ENCODE measurements at regions of chr11 and their contacts with region 1.

Region 1: GRCh38 chr11:116357784-116358544 is 414.8 kb downstream of the BUD13 start:
- DNase-seq: peak; percentile 35
- H3K4me3 ChIP-seq: no peak overlapping the region
- H3K27ac ChIP-seq: no peak overlapping the region
- H3K4me1 ChIP-seq: no peaks in the 10 kb centered on the region
- H3K27me3 ChIP-seq: peaks cover 7% of the 10 kb centered on the region
- CTCF ChIP-seq: peak; percentile 61

Region 2: GRCh38 chr11:116499396-116500003 is 141.5 kb after region 1 on chr11:
- intact Hi-C with region 1: loop called (anchors 2 kb)
- DNase-seq: peak; percentile 88
- H3K4me3 ChIP-seq: no peak overlapping the region
- H3K27ac ChIP-seq: no peak overlapping the region
- H3K4me1 ChIP-seq: no peaks in the 10 kb centered on the region
- H3K27me3 ChIP-seq: no peaks in the 10 kb centered on the region
- CTCF ChIP-seq: peak; percentile 60

Region 3: DNA sequence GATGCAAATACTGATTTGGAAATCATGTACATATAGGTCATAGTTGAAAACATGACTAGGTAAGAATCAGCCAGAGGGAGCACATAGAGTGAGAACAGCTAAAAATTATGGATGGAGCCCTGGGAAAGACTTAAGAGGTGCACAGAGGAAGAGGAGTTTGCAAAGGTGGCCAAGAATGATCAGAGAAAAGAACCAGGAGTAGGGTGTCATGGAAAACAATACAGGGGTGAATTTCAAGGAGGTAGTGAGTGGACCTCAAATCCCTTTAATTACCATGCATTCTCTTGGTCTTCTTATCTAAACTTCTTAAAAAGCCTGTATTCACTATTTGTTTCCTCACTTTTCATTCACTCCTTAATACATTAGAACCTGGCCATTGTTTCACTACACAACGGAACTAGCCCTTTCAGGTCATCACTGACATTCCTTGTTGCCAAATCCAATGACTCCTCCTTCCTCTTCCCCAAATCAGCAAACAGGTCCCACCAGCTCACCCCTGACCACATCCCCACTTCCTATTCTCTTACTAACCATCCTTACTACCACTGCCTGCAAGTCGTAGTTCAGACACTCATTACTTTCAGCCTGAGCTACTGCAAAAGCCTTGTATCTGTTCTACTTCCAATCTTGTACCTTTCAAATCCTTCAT is 392.2 kb after region 1 on chr11:
- intact Hi-C with region 1: no loop called
- DNase-seq: no peak
- H3K4me3 ChIP-seq: no peak overlapping the region
- H3K27ac ChIP-seq: no peak overlapping the region
- H3K4me1 ChIP-seq: no peaks in the 10 kb centered on the region
- H3K27me3 ChIP-seq: no peaks in the 10 kb centered on the region
- CTCF ChIP-seq: no peak

Measured in colonic mucosa (tissue), 4 donors.